GM10248 (cell line): ENCODE measurements at regions of chr3 and their contacts with region 1.

Region 1: GRCh38 chr3:149752051-149752787 is at the start of gene COMMD2:
- DNase-seq: peak; percentile 84
- CTCF ChIP-seq: no peak

Region 2: GRCh38 chr3:149377408-149378377 is 374.5 kb before region 1 on chr3 and contains the start of gene TM4SF1:
- CTCF ChIA-PET with region 1: no interaction called
- POLR2A ChIA-PET with region 1: no interaction called
- DNase-seq: no peak
- CTCF ChIP-seq: no peak

Region 3: DNA sequence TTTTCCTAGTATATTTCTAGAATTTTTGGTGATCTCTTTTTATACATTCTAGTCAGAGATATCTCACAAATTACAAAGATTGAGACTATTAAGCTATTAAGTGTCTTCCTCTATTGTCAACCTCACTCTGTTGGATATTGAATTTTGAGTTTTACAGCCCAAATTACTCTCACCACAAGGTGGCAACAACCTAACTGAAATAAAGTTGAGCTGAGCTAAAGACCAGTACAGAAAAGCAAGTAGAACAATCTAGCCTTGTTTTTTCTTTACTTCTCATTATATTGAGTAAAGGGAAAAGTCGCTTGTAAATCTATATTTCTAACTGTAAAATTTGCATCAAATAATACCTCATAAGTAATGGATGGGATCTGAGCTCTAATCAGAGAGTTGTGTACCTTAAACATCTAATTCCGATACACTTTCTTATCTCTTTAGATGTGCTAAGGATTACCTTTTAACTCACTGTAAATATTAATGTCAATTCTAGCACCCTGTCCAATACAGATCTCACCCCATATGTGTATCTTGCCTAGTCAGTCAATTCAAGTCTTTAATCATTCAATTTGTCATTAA is 13.6 kb after region 1 on chr3:
- CTCF ChIA-PET with region 1: interaction called, 31 read pairs
- POLR2A ChIA-PET with region 1: no interaction called
- DNase-seq: peak; percentile 16
- CTCF ChIP-seq: peak; percentile 34

Region 4: DNA sequence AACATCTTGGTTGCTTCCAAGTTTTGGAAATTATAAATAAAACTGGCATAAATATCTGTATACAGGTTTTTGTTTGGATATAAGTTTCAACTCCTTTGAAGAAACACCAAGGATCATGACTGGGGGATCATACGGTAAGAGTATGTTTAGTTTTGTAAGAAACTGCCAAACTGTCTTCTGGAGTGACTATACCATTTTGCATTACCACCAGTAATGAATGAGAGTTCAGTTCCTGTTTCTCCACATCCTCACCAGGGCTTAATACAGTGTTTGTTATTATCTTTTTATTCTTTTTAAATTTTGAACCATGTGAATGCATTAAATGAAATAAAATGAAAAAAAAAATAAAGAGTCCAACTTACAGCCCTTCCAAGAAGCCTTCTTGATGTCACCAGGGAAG is 43.8 kb after region 1 on chr3:
- CTCF ChIA-PET with region 1: no interaction called
- POLR2A ChIA-PET with region 1: no interaction called
- DNase-seq: no peak
- CTCF ChIP-seq: no peak

Region 5: DNA sequence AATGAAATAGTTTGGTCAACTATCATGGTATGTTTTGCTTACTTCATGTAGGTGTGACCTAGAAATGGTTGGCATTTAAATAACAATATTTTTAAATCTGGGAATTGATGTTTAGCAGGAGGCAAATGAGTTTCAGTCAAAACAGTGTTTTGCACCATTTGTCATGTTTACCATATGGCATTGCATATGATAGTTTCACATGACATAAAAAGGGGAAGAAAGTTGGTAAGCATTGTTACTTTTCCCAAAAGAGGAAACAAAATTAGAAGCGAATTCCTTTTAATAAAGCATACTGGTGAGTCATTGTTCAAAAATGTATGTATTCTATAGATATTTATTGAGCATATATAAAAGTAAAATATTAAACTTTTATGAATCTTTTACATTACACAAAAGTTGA is 63.1 kb after region 1 on chr3:
- CTCF ChIA-PET with region 1: no interaction called
- POLR2A ChIA-PET with region 1: no interaction called
- DNase-seq: no peak
- CTCF ChIP-seq: no peak

Region 6: GRCh38 chr3:150038830-150039229 is 286.6 kb after region 1 on chr3:
- CTCF ChIA-PET with region 1: no interaction called
- POLR2A ChIA-PET with region 1: no interaction called
- DNase-seq: no peak
- CTCF ChIP-seq: no peak